ENCODE measurements at regions of chr6 and their contacts with region 1.

Region 1: DNA sequence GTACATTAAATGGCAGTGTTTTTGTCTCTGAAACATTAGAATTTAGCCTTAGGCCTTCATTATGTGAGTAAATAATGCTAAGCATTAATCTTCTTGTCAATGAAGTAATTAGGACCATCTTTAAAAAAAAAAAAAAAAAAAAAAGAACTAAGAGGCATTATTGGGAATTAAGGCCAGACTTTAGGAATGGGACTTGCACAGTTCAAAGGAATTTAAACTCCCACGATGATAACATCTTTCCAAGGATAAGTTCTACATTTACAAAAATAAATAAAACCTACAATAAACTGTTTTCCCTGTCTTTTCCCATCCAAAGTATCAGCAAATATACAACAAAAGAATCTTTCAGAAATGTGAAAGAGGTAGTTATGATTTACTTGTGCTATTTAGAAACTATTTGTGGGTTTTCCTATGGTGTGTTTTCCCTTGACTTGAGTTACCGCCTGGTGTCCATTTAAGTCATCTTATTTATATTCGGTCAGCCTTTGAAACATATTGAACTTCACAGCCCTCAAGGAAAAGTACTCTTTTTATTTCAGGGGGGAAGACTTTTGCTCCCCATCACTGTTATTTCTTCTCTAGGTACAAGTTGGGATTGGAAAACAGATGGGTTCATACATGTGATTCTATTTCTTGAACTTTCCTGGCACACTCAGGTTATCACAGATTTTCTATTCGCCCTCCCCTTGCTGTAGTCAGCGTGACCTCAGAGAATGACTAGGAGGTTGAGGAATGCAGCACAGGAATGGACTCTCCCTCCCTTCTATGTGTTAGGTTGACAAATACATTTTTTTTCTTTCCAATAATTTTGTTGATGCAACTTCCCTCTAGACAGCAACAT is 13.6 kb downstream of the STMND1 start:
- DNase-seq: peak; percentile 88
- ATAC-seq: peak; percentile 98
- H3K4me3 ChIP-seq: peak overlapping the region; percentile 28; the same call in 1 of the 2 replicates
- H3K27ac ChIP-seq: 0 out of 2 replicates have a peak overlapping the region, but pooled peaks have one; percentile 22
- H3K4me1 ChIP-seq: peaks cover 21% of the 10 kb centered on the region
- H3K27me3 ChIP-seq: no peaks in the 10 kb centered on the region
- CTCF ChIP-seq: no peak

Region 2: DNA sequence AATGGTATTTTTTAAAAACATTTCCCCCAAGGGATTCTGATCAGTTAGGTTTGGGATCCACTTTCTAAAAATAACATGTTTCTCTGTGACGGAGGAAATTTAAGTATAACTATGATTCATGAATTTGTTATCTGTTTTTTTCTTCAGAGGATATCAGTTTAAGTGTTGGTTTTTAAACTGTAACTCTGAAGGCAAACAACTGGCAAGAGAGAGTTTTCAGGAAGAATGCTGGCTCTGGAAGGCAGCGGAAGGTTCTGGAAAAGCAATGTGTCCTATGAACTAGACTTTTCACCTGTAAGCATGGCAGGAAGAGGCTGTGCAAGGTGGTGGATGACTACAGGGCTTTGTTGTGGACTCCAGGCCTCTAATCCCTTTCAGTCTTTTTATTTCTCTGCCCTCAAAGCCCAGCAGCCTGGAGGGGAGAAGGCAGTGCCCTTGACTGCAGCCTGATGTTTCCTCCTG is 724.0 kb before region 1 on chr6:
- CTCF ChIA-PET with region 1: interaction called, 18 read pairs
- POLR2A ChIA-PET with region 1: no interaction called
- intact Hi-C with region 1: no loop called
- DNase-seq: no peak
- ATAC-seq: no peak
- H3K4me3 ChIP-seq: no peak overlapping the region
- H3K27ac ChIP-seq: no peak overlapping the region
- H3K4me1 ChIP-seq: no peaks in the 10 kb centered on the region
- H3K27me3 ChIP-seq: no peaks in the 10 kb centered on the region
- CTCF ChIP-seq: no peak

Region 3: GRCh38 chr6:17980329-17980728 is 864.9 kb after region 1 on chr6:
- CTCF ChIA-PET with region 1: no interaction called
- POLR2A ChIA-PET with region 1: interaction called, 14 read pairs
- intact Hi-C with region 1: no loop called
- DNase-seq: no peak
- ATAC-seq: no peak
- H3K4me3 ChIP-seq: no peak overlapping the region
- H3K27ac ChIP-seq: no peak overlapping the region
- H3K4me1 ChIP-seq: peaks cover 29% of the 10 kb centered on the region
- H3K27me3 ChIP-seq: no peaks in the 10 kb centered on the region
- CTCF ChIP-seq: no peak

Measured in PC-3 (cell line).